MCF 10A (cell line): ENCODE measurements at regions of chr6 and their contacts with region 1.

Region 1: DNA sequence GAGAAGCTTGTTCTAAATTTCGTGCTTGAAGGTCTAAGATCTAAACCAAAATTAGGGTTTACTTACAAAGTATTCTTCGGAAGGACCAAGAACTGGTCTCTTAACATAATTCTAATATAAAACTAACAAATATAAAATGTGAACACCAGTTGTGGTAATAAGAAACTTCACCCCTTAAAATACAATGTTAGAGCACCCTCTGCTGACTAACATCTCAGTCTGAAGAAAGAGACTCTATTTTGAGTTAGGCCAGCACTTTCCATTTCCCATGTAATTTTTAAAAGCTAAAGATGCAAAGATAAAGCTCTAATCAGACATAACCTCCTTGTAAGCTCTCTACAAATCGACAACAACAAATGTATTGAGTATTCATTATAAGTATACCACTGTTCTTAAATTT is 24.6 kb downstream of the ATG5 start:
- DNase-seq: peak; percentile 62
- H3K4me3 Mint-ChIP-seq: no peak overlapping the region
- H3K27ac Mint-ChIP-seq: no peak overlapping the region
- H3K4me1 Mint-ChIP-seq: no peaks in the 10 kb centered on the region
- H3K27me3 Mint-ChIP-seq: no peaks in the 10 kb centered on the region
- CTCF ChIP-seq: peak; percentile 50

Region 2: DNA sequence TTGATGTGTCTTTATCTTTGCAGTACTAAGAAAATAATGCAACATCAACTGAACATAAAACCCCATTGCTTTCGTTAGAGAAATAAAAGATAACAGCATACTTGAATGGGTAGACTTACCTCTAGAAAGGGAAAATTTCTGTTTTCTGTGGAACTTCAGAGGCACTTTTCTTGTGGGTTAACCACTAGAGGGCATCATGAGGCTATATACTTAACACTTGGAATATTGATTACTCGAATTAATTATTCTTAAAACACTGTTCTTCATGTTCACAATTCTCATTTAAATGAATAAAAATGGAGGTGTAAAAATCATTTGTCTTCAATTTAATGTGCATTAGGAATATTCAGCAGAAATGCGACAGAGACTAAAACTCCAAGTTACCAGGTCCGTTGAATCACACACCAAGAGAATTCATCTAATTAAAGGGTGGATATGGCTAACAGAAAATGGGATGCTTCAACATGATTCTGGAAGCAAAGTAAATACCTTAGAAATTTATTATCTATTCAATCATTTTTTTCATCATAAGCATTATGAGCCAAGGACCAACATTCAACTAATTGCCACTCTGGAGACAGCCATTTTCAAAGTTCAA is 567.3 kb before region 1 on chr6:
- CTCF ChIA-PET with region 1: no interaction called
- POLR2A ChIA-PET with region 1: no interaction called
- intact Hi-C with region 1: loop called (anchors 2 kb)
- DNase-seq: peak; percentile 51
- H3K4me3 Mint-ChIP-seq: no peak overlapping the region
- H3K27ac Mint-ChIP-seq: no peak overlapping the region
- H3K4me1 Mint-ChIP-seq: peaks cover 8% of the 10 kb centered on the region
- H3K27me3 Mint-ChIP-seq: no peaks in the 10 kb centered on the region
- CTCF ChIP-seq: peak; percentile 35